Activated CD4-positive, alpha-beta T cell treated with anti-CD3 and anti-CD28 coated beads, Interleukin-2, amount 10 ng/mL, durations not matched to agents 24 days and 14 days (primary cell): ENCODE measurements at regions of chr18 and their contacts with region 1.

Region 1: DNA sequence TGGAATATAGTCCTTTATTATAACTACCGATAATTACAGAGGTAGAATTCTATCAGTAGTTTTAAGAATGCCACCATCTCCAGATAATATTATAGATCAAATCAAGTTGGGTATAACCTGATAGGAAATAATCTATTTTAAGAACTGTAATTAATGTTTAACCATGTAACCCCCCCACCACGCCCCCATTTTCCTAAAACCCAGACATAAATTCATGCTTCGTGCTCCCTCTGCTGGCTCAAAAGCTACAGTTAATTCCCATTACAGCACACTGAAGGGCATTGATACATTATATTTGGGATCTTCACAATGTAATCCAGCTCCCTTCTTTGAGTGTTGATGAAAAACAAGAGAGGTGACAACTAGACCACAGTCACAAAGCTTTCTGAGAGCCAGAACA is 228.0 kb upstream of the SMAD7 start:
- DNase-seq: no peak
- H3K4me3 Mint-ChIP-seq: no peak overlapping the region
- H3K27ac Mint-ChIP-seq: no peak overlapping the region
- H3K4me1 Mint-ChIP-seq: peaks cover 21% of the 10 kb centered on the region
- H3K27me3 Mint-ChIP-seq: peaks cover 1% of the 10 kb centered on the region

Region 2: GRCh38 chr18:48540251-48541025 is 638.3 kb before region 1 on chr18:
- intact Hi-C with region 1: loop called (anchors 2 kb)
- DNase-seq: peak; percentile 83
- H3K4me3 Mint-ChIP-seq: peak overlapping the region; percentile 84
- H3K27ac Mint-ChIP-seq: no peak overlapping the region
- H3K4me1 Mint-ChIP-seq: peaks cover 16% of the 10 kb centered on the region
- H3K27me3 Mint-ChIP-seq: peaks cover 33% of the 10 kb centered on the region

Region 3: GRCh38 chr18:48834413-48835031 is 344.2 kb before region 1 on chr18:
- intact Hi-C with region 1: loop called (anchors 10 kb)
- DNase-seq: peak; percentile 91
- H3K4me3 Mint-ChIP-seq: peak overlapping the region; percentile 89
- H3K27ac Mint-ChIP-seq: peak overlapping the region; percentile 99
- H3K4me1 Mint-ChIP-seq: peaks cover 66% of the 10 kb centered on the region
- H3K27me3 Mint-ChIP-seq: no peaks in the 10 kb centered on the region

Region 4: DNA sequence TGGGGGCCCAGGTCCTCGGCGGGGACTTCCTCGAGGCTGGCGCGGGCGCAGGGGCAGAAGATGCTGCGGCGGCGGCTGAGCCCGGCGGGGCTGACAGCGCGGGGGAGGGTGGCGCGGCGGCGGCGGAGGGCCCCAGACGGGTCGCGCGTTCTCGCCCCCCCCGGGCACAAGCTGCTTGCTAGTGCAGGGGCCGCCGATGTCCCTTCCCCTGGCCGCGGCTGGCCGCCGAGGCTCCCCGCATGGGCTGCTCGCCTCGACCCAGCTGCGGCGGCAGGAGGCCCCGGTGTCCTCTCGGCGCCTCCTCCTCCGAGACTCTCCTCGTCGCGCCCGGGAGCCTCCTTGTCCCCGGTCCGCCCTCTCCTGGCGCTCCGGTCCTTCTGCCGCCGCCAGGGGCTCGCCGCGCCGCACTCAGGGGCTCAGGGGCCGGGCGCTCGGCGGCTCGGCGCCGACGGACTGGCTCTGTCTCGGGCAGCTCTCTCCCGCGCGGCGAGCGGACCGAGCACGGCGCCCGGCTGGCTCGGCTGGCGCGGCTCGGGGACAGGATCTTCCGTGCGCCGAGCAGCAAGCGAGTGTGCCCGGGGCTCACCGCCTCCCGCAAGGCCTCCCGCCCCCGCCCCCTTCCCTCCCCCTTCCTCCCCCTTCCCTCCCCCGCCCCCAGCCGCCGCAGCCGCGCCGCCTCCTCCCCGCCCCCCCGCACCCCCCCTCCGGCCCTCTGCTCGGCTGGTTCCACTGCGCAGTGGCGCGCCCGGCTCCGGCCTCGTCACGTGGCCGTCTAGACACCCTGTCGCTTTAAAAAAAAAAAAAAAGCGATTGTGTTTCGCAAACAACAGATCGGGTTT is 227.1 kb before region 1 on chr18:
- intact Hi-C with region 1: loop called (anchors 5 kb)
- DNase-seq: peak; percentile 90
- H3K4me3 Mint-ChIP-seq: peak overlapping the region; percentile 94
- H3K27ac Mint-ChIP-seq: peak overlapping the region; percentile 90
- H3K4me1 Mint-ChIP-seq: peaks cover 39% of the 10 kb centered on the region
- H3K27me3 Mint-ChIP-seq: no peaks in the 10 kb centered on the region

Region 5: DNA sequence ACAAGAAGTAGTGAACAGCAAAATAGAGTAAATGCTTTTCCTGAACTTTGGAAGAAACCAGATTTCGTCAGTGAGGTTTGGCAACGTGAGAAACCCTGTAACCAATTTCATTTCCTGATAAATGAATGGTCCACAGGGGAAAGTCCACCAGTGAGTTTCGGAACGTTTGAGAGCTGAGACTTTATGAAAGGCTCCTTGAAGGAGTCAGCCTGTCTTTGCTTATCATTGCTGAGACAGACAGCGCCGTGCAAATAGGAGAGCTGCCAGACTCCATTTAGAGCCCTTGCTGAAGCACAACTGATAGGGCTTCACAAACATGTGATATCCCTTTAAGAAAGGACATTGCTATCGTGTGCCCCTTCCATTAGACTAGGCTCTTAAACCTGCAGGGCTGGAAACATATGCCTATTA is 106.2 kb before region 1 on chr18:
- intact Hi-C with region 1: loop called (anchors 5 kb)
- DNase-seq: no peak
- H3K4me3 Mint-ChIP-seq: no peak overlapping the region
- H3K27ac Mint-ChIP-seq: peak overlapping the region; percentile 59
- H3K4me1 Mint-ChIP-seq: peaks cover 5% of the 10 kb centered on the region
- H3K27me3 Mint-ChIP-seq: no peaks in the 10 kb centered on the region

Region 6: DNA sequence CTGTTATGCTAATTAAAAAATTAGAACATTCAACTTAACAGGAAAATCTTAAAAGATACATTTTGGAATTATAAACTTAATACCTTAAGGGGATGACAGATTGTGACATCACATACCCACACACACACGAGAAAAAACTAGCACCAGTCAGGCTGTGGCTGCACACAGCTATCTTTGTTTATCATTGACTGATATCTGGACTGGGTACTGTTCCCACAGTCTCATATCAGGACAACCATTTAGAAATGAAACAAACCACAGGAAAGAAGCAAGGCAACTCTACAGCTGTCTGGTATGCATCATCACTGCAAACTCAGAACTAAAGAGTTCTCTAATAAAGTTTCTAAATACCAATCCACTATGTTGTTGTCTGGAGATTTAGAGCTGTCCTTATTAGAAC is 17.1 kb before region 1 on chr18:
- intact Hi-C with region 1: loop called (anchors 1 kb)
- DNase-seq: peak; percentile 72
- H3K4me3 Mint-ChIP-seq: no peak overlapping the region
- H3K27ac Mint-ChIP-seq: no peak overlapping the region
- H3K4me1 Mint-ChIP-seq: peaks cover 10% of the 10 kb centered on the region
- H3K27me3 Mint-ChIP-seq: no peaks in the 10 kb centered on the region

Region 7: GRCh38 chr18:49412679-49413078 is 233.9 kb after region 1 on chr18:
- intact Hi-C with region 1: loop called (anchors 10 kb)
- DNase-seq: no peak
- H3K4me3 Mint-ChIP-seq: peak overlapping the region; percentile 42
- H3K27ac Mint-ChIP-seq: peak overlapping the region; percentile 66
- H3K4me1 Mint-ChIP-seq: peaks cover 29% of the 10 kb centered on the region
- H3K27me3 Mint-ChIP-seq: no peaks in the 10 kb centered on the region